Breast epithelium (tissue), 4 donors: ENCODE measurements at regions of chr10 and their contacts with region 1.

Region 1: GRCh38 chr10:33684211-33684611 is 349.7 kb upstream of the NRP1 start:
- DNase-seq: no peak
- H3K4me3 ChIP-seq: no peak overlapping the region
- H3K27ac ChIP-seq: no peak overlapping the region
- H3K4me1 ChIP-seq: no peaks in the 10 kb centered on the region
- H3K27me3 ChIP-seq: no peaks in the 10 kb centered on the region
- CTCF ChIP-seq: no peak
- POLR2A ChIP-seq: no peak

Region 2: GRCh38 chr10:33927347-33927746 is 243.1 kb after region 1 on chr10:
- intact Hi-C with region 1: loop called (anchors 10 kb)
- DNase-seq: peak in 1 of 2 donors; percentile 84
- H3K4me3 ChIP-seq: no peak overlapping the region
- H3K27ac ChIP-seq: peak overlapping the region; percentile 62 to 77
- H3K4me1 ChIP-seq: no peaks in the 10 kb centered on the region
- H3K27me3 ChIP-seq: no peaks in the 10 kb centered on the region
- CTCF ChIP-seq: no peak
- POLR2A ChIP-seq: no peak